IMR-90 (cell line): ENCODE measurements at regions of chr7 and their contacts with region 1.

Region 1: DNA sequence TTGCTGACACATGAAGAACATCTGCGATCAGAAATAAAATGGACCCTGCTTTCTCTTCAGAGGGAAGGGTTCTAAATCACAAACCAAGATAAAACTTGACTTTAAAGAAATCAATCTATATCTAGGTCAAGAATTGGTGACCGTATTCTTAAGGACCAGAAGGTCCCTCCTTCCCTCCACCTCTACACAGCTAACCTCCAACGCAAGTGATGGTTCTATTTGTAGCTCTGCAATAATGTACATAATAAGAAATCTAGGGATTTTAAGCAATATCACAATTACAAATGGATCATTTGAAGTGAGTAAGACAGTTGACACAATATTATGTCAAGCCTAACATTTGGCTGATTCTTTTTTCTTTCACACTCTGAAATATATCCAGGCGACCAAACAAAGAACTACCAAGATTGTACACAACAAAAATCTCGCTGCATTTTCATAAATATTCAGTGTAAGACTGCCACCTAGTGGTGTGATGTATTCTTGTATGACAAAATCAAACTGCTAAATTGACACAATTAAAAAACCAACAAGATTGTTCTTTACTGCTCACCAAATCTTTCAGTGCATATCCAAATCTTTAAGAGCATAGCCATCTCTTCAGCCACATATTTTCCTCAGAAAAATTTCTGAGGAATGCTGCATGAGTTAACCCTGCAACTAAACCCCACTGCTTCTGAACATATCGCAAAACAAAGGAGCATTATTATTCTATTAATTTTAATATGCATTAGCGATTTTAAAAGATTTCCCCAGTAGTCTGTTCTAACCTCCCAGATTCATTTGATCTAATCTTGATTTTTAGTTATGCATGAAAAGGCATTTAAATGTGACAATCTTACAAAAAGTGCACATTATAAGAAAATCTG is 44.5 kb downstream of the ICA1 start:
- DNase-seq: peak; percentile 73
- ATAC-seq: peak; percentile 83
- H3K4me3 ChIP-seq: no peak overlapping the region
- H3K27ac ChIP-seq: no peak overlapping the region
- H3K4me1 ChIP-seq: no peaks in the 10 kb centered on the region
- H3K27me3 ChIP-seq: no peaks in the 10 kb centered on the region
- CTCF ChIP-seq: peak; percentile 70
- POLR2A ChIP-seq: no peak
- RAD21 ChIP-seq: peak; percentile 70

Region 2: GRCh38 chr7:7542251-7542835 is 675.1 kb before region 1 on chr7:
- CTCF ChIA-PET with region 1: no interaction called
- POLR2A ChIA-PET with region 1: no interaction called
- dilution Hi-C with region 1: no loop called
- in situ Hi-C with region 1: no loop called
- intact Hi-C with region 1: loop called (anchors 2 kb)
- DNase-seq: no peak
- ATAC-seq: no peak
- H3K4me3 ChIP-seq: no peak overlapping the region
- H3K27ac ChIP-seq: no peak overlapping the region
- H3K4me1 ChIP-seq: no peaks in the 10 kb centered on the region
- H3K27me3 ChIP-seq: no peaks in the 10 kb centered on the region
- CTCF ChIP-seq: no peak
- POLR2A ChIP-seq: no peak
- RAD21 ChIP-seq: no peak

Region 3: DNA sequence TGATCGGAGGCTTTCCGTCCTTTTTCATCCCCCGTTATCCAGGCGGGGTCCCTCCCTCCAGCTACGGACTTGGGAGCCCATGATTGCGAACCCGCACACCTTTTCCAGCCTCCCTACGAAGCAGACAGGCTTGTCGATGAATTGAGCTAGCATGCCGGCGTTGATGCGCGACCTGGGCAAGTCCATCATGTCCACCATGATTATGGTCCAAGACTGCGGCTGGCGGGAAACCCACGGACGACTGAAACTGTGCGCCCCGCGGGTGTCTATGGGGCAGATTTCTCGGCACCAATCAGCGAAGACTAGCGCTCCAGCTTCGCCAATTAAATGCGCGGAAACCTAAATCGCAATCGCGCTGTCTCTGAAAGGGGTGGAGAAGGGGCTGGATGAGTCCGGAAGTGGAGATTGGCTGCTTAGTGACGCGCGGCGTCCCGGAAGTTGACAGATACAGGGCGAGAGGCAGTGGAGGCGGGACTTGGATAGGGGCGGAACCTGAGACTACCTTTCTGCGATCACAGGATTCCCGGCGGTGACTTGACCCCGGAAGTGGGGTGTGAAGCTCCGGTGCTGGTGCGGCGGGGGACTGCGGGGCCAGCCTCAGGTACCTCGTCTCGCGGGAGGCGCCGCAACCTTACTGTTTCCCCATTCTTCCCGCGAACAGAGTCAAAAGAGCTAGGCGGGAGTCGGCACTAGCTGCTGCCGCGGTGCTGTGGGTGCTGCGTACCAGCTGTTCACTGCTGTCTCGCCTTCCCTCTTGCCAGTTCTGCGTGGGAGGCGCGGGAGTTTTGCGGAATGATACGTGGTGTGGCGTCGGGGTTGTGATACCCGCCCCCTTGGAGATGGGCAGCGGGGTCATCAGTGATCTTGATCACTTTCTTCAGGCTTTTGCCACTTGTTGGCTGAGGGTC is 577.0 kb before region 1 on chr7 and contains the start of gene UMAD1:
- CTCF ChIA-PET with region 1: interaction called, 3 read pairs
- POLR2A ChIA-PET with region 1: no interaction called
- dilution Hi-C with region 1: no loop called
- in situ Hi-C with region 1: no loop called
- intact Hi-C with region 1: loop called (anchors 2 kb)
- DNase-seq: peak; percentile 98
- ATAC-seq: peak; percentile 97
- H3K4me3 ChIP-seq: peak within 1 kb of the TSS; percentile 78
- H3K27ac ChIP-seq: peak within 1 kb of the TSS; percentile 58
- H3K4me1 ChIP-seq: no peaks in the 10 kb centered on the region
- H3K27me3 ChIP-seq: no peaks in the 10 kb centered on the region
- CTCF ChIP-seq: no peak
- POLR2A ChIP-seq: peak; percentile 79; the same call in 1 of the 2 replicates
- RAD21 ChIP-seq: no peak
- total RNA-seq, gene UMAD1: 5.2 and 9.2 TPM in 2 replicates

Region 4: DNA sequence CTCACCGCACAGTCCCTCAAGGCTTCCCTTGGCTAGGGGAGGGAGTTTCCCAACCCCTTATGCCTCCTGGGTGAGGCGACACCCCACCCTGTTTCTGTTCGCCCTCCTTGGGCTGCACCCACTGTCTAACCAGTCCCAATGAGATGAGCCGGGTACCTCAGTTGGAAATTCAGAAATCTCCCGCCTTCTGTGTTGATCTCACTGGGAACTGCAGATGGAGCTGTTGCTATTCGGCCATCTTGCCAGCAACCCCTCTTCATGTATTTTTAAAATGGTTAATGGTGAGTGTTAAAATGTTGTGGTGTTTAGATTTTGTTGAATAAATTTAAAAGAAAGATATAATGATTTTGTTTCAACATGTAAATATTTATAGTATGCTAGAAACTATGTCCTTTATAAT is 554.9 kb before region 1 on chr7:
- CTCF ChIA-PET with region 1: interaction called, 3 read pairs
- POLR2A ChIA-PET with region 1: no interaction called
- dilution Hi-C with region 1: no loop called
- in situ Hi-C with region 1: loop called (anchors 25 kb)
- intact Hi-C with region 1: loop called (anchors 2 kb)
- DNase-seq: peak; percentile 34
- ATAC-seq: peak; percentile 51
- H3K4me3 ChIP-seq: no peak overlapping the region
- H3K27ac ChIP-seq: no peak overlapping the region
- H3K4me1 ChIP-seq: no peaks in the 10 kb centered on the region
- H3K27me3 ChIP-seq: no peaks in the 10 kb centered on the region
- CTCF ChIP-seq: peak; percentile 55
- POLR2A ChIP-seq: no peak
- RAD21 ChIP-seq: peak; percentile 61

Region 5: DNA sequence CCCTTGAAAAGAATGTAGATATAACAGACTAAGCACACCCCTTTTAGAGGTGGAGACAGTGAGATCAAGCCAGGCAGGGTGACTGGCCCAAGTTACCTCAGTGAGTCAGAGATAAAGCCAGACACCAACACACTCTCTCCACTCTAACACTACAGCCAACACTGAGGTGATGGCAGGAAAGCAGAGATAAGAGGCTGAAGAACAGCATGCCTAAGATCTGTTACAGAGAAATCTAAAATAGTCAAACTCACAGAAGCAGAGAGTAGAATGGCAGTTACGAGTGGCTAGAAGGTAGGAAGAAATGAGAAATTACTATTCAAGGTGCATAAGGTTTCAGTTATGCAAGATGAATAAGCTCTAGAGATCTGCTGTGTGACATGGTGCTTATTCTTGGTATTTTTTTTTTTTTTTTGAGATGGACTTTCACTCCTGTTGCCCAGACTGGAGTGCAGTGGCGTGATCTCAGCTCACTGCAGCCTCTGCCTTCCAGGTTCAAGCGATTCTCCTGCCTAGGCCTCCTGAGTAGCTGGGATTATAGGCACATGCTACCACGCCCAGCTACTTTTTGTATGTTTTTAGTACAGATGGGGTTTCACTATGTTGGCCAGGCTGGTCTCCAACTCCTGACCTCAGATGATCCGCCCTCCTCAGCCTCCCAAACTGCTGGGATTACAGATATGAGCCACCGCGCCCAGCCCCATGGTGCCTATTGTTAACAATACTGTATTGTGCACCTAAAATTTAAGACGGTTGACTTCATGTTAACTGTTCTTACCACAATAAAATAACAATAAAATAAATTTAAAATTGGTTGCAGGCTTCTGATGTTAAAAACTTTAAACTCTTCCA is 15.8 kb after region 1 on chr7:
- CTCF ChIA-PET with region 1: no interaction called
- POLR2A ChIA-PET with region 1: no interaction called
- dilution Hi-C with region 1: no loop called
- in situ Hi-C with region 1: no loop called
- intact Hi-C with region 1: no loop called
- DNase-seq: no peak
- ATAC-seq: no peak
- H3K4me3 ChIP-seq: no peak overlapping the region
- H3K27ac ChIP-seq: no peak overlapping the region
- H3K4me1 ChIP-seq: no peaks in the 10 kb centered on the region
- H3K27me3 ChIP-seq: no peaks in the 10 kb centered on the region
- CTCF ChIP-seq: no peak
- POLR2A ChIP-seq: no peak
- RAD21 ChIP-seq: no peak

Region 6: GRCh38 chr7:8274589-8274988 is 57.2 kb after region 1 on chr7:
- CTCF ChIA-PET with region 1: no interaction called
- POLR2A ChIA-PET with region 1: no interaction called
- dilution Hi-C with region 1: no loop called
- in situ Hi-C with region 1: no loop called
- intact Hi-C with region 1: no loop called
- DNase-seq: no peak
- ATAC-seq: no peak
- H3K4me3 ChIP-seq: no peak overlapping the region
- H3K27ac ChIP-seq: no peak overlapping the region
- H3K4me1 ChIP-seq: no peaks in the 10 kb centered on the region
- H3K27me3 ChIP-seq: no peaks in the 10 kb centered on the region
- CTCF ChIP-seq: no peak
- POLR2A ChIP-seq: no peak
- RAD21 ChIP-seq: no peak